Calu3 (cell line): ENCODE measurements at regions of chr3 and their contacts with region 1.

Region 1: GRCh38 chr3:31815631-31816440 is 165.2 kb downstream of the OSBPL10 start:
- DNase-seq: no peak
- H3K4me3 Mint-ChIP-seq: no peak overlapping the region
- H3K27ac Mint-ChIP-seq: no peak overlapping the region
- H3K4me1 Mint-ChIP-seq: no peaks in the 10 kb centered on the region
- H3K27me3 Mint-ChIP-seq: no peaks in the 10 kb centered on the region
- CTCF ChIP-seq: no peak

Region 2: GRCh38 chr3:31929826-31930502 is 114.1 kb after region 1 on chr3:
- CTCF ChIA-PET with region 1: interaction called, 10 read pairs
- intact Hi-C with region 1: no loop called
- DNase-seq: no peak
- H3K4me3 Mint-ChIP-seq: no peak overlapping the region
- H3K27ac Mint-ChIP-seq: no peak overlapping the region
- H3K4me1 Mint-ChIP-seq: peaks cover 19% of the 10 kb centered on the region
- H3K27me3 Mint-ChIP-seq: no peaks in the 10 kb centered on the region
- CTCF ChIP-seq: no peak